CD8-positive, alpha-beta memory T cell (primary cell): ENCODE measurements at regions of chr22 and their contacts with region 1.

Region 1: DNA sequence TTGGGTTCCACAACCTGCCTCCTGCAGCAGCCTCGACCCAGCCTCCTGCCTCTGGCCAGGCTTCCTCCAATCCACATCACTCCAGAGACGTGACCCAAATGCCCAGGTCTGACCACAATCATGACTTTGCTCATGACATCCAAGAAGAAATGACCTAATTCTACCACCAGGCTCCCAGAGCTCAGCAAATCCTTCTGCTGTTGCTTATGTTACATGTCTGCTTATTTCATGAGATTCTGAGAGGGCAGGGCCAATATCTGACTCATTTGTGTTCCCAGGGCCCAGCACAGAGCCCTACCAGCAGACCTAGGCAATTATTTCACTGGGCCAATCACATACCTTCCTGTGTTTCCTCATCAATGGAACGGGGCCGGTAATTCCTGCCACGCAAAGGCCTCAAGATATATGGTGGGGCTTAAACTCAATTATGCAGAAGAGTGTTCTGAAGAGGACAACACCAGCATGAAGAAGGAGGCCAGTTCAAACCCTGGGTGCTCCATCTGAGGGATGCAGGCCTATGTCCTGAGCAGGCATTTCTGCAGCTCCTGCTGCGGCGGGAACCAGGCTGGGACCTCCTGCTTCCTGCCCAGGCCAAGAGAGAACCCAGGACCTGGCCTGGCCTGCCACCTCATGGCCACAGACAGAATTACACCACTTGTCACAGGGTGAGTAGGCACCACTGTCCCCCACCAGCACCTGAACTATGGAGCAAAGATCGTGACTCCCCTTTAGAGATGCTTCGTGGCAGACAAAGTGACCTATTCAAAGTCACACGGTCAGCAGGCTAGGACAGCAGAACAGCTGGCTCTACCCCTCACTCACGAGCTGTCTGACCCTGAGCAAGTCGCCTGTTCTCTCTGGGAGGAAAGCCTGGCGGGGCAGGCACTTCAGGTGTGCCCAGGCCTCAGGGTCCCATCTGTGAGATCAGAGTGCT is 5.9 kb downstream of the CENPM start:
- DNase-seq: peak; percentile 71 to 91 (median 85)
- H3K4me3 ChIP-seq: peak overlapping the region; percentile 39
- H3K4me3 Mint-ChIP-seq: peak overlapping the region; percentile 65 to 98 (median 92)
- H3K27ac ChIP-seq: peak overlapping the region; percentile 95
- H3K27ac Mint-ChIP-seq: peak overlapping the region; percentile 94 to 100 (median 100)
- H3K4me1 ChIP-seq: peaks cover 37% of the 10 kb centered on the region
- H3K4me1 Mint-ChIP-seq: peaks cover 36 to 56% (median 40%) of the 10 kb centered on the region in 3 donors
- H3K27me3 ChIP-seq: no peaks in the 10 kb centered on the region
- H3K27me3 Mint-ChIP-seq: peaks cover 0 to 4% of the 10 kb centered on the region in 2 donors

Region 2: GRCh38 chr22:41666661-41667258 is 274.3 kb before region 1 on chr22:
- CTCF ChIA-PET with region 1: interaction called, 17 read pairs
- POLR2A ChIA-PET with region 1: interaction called, 4 read pairs
- DNase-seq: peak; percentile 88 to 96 (median 93)
- H3K4me3 ChIP-seq: peak overlapping the region; percentile 54
- H3K4me3 Mint-ChIP-seq: peak overlapping the region; percentile 64 to 91 (median 88)
- H3K27ac ChIP-seq: peak overlapping the region; percentile 79
- H3K27ac Mint-ChIP-seq: peak overlapping the region; percentile 81 to 98 (median 96)
- H3K4me1 ChIP-seq: peaks cover 10% of the 10 kb centered on the region
- H3K4me1 Mint-ChIP-seq: peaks cover 13 to 15% (median 15%) of the 10 kb centered on the region in 3 donors
- H3K27me3 ChIP-seq: no peaks in the 10 kb centered on the region
- H3K27me3 Mint-ChIP-seq: no peaks in the 10 kb centered on the region

Region 3: DNA sequence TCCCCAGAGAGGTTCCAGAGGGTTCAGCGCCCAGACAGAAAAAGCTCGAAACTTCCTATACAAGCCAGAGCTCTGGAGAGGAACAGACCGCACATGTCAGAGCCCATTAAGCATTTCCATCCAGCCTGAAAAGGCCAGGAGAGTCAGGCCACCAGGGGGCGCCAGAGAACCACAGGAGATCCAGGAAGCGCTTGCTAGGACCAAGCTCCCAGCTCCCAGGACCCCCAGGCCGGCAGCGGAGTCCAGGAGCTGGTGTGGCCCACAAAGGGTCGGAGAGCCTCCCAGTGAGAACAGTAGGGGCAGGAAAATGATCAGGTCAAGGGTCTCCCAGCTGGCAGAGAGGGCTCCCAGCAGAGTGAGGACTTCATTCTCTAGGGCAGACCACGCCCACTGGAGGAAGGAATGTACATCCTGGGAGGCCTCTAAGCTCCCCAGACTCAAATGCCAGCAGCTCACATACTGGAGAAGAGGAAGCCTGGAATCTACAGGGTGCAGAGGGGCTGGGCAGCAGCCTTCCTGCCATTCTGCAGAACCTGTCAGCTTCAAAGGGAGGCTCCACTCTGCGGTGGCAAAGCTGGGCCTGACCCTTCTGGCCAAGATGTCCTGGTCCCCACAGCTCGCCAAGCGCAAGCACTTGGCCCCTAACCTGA is 243.8 kb before region 1 on chr22:
- CTCF ChIA-PET with region 1: interaction called, 91 read pairs
- POLR2A ChIA-PET with region 1: interaction called, 7 read pairs
- DNase-seq: peak; percentile 76 to 94 (median 89)
- H3K4me3 ChIP-seq: peak overlapping the region; percentile 30
- H3K4me3 Mint-ChIP-seq: peak overlapping the region in 6 of 7 donors; percentile 12 to 76 (median 58)
- H3K27ac ChIP-seq: no peak overlapping the region
- H3K27ac Mint-ChIP-seq: peak overlapping the region in 7 of 8 donors; percentile 64 to 91 (median 87)
- H3K4me1 ChIP-seq: peaks cover 7% of the 10 kb centered on the region
- H3K4me1 Mint-ChIP-seq: peaks cover 9 to 12% (median 11%) of the 10 kb centered on the region in 3 donors
- H3K27me3 ChIP-seq: no peaks in the 10 kb centered on the region
- H3K27me3 Mint-ChIP-seq: peaks cover 0 to 1% of the 10 kb centered on the region in 2 donors

Region 4: GRCh38 chr22:41780746-41781505 is 160.2 kb before region 1 on chr22:
- CTCF ChIA-PET with region 1: interaction called, 13 read pairs
- POLR2A ChIA-PET with region 1: interaction called, 17 read pairs
- DNase-seq: peak; percentile 83 to 96 (median 93)
- H3K4me3 ChIP-seq: peak overlapping the region; percentile 78
- H3K4me3 Mint-ChIP-seq: peak overlapping the region; percentile 76 to 92 (median 90)
- H3K27ac ChIP-seq: peak overlapping the region; percentile 71
- H3K27ac Mint-ChIP-seq: peak overlapping the region; percentile 97 to 100 (median 100)
- H3K4me1 ChIP-seq: peaks cover 44% of the 10 kb centered on the region
- H3K4me1 Mint-ChIP-seq: peaks cover 38 to 54% (median 50%) of the 10 kb centered on the region in 3 donors
- H3K27me3 ChIP-seq: no peaks in the 10 kb centered on the region
- H3K27me3 Mint-ChIP-seq: no peaks in the 10 kb centered on the region

Region 5: DNA sequence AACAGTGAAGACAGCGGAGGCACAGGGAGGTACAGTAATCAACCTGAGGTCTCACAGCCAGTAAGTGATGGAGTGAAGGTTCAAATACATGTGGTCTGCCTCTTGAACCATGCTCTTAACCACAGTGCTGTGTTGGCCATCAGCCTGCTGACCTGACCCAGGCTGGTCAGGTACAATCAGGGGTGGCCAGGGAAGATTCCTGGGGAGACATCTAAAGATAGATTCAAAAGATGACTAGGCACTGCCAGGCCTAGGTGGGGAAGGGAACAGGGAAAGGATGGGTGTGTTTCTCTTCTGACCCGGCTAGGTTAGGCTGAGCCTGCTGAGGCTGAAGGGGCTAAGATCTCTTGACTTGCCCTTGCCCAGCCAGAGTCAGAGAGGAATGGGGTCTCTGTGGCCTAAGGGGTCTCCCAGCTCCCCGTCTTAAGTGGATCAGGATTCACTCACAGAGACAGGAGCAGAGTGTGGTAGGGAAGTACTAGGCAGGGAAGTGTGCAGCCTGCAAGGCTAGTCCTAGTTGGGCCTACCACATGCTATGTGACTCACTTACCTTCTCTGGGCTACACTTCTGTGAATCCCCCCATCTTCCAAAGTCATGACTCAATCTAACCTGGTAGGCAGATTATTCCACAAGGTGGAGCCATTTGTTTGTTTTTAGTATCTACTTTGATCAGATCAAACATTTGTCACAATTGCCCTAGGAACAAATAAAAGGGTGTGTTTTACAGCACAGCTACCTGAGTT is 118.6 kb before region 1 on chr22:
- CTCF ChIA-PET with region 1: interaction called, 47 read pairs
- POLR2A ChIA-PET with region 1: interaction called, 18 read pairs
- DNase-seq: peak in 4 of 5 donors; percentile 15 to 71 (median 58)
- H3K4me3 ChIP-seq: no peak overlapping the region
- H3K4me3 Mint-ChIP-seq: peak overlapping the region in 1 of 7 donors; percentile 43
- H3K27ac ChIP-seq: no peak overlapping the region
- H3K27ac Mint-ChIP-seq: peak overlapping the region; percentile 27 to 88 (median 65)
- H3K4me1 ChIP-seq: no peaks in the 10 kb centered on the region
- H3K4me1 Mint-ChIP-seq: peaks cover 6 to 15% (median 11%) of the 10 kb centered on the region in 3 donors
- H3K27me3 ChIP-seq: no peaks in the 10 kb centered on the region
- H3K27me3 Mint-ChIP-seq: peaks cover 0 to 2% of the 10 kb centered on the region in 2 donors

Region 6: GRCh38 chr22:41857155-41857859 is 83.8 kb before region 1 on chr22:
- CTCF ChIA-PET with region 1: interaction called, 20 read pairs
- POLR2A ChIA-PET with region 1: interaction called, 12 read pairs
- DNase-seq: peak; percentile 59 to 77 (median 69)
- H3K4me3 ChIP-seq: no peak overlapping the region
- H3K4me3 Mint-ChIP-seq: peak overlapping the region in 6 of 7 donors; percentile 11 to 66 (median 40)
- H3K27ac ChIP-seq: no peak overlapping the region
- H3K27ac Mint-ChIP-seq: peak overlapping the region; percentile 81 to 96 (median 88)
- H3K4me1 ChIP-seq: peaks cover 31% of the 10 kb centered on the region
- H3K4me1 Mint-ChIP-seq: peaks cover 41 to 68% (median 60%) of the 10 kb centered on the region in 3 donors
- H3K27me3 ChIP-seq: no peaks in the 10 kb centered on the region
- H3K27me3 Mint-ChIP-seq: no peaks in the 10 kb centered on the region

Region 7: GRCh38 chr22:41919357-41920224 is 21.5 kb before region 1 on chr22:
- CTCF ChIA-PET with region 1: interaction called, 106 read pairs
- POLR2A ChIA-PET with region 1: interaction called, 12 read pairs
- DNase-seq: peak in 3 of 5 donors; percentile 35 to 67 (median 46)
- H3K4me3 ChIP-seq: peak overlapping the region; percentile 67
- H3K4me3 Mint-ChIP-seq: peak overlapping the region; percentile 45 to 75 (median 65)
- H3K27ac ChIP-seq: no peak overlapping the region
- H3K27ac Mint-ChIP-seq: peak overlapping the region in 4 of 8 donors; percentile 24 to 77 (median 42)
- H3K4me1 ChIP-seq: peaks cover 20% of the 10 kb centered on the region
- H3K4me1 Mint-ChIP-seq: peaks cover 0 to 26% (median 14%) of the 10 kb centered on the region in 3 donors
- H3K27me3 ChIP-seq: peaks cover 14% of the 10 kb centered on the region
- H3K27me3 Mint-ChIP-seq: peaks cover 9 to 12% of the 10 kb centered on the region in 2 donors

Region 8: DNA sequence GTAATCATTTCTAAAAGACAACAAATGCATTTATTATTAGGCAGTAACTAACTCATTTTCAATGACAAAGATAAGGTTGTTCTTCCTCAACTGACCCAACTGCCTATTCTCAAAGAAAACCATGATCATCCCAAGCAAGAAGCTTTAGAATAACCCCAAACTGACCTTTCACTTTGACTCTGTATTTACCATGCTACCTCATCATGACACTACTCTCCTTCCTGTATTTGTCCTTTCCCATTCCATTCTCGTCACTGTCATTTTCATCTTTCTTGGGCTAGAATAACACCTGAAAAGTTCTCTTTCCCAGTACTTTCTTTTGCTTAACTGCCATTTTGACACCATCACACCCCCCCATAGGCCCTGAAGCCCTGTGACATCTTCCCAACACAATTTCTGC is 281.0 kb after region 1 on chr22:
- CTCF ChIA-PET with region 1: no interaction called
- POLR2A ChIA-PET with region 1: no interaction called
- DNase-seq: no peak
- H3K4me3 ChIP-seq: no peak overlapping the region
- H3K4me3 Mint-ChIP-seq: no peak overlapping the region
- H3K27ac ChIP-seq: peak overlapping the region; percentile 0
- H3K27ac Mint-ChIP-seq: peak overlapping the region in 5 of 8 donors; percentile 2 to 45 (median 38)
- H3K4me1 ChIP-seq: peaks cover 37% of the 10 kb centered on the region
- H3K4me1 Mint-ChIP-seq: peaks cover 57 to 78% (median 66%) of the 10 kb centered on the region in 3 donors
- H3K27me3 ChIP-seq: no peaks in the 10 kb centered on the region
- H3K27me3 Mint-ChIP-seq: peaks cover 0 to 2% of the 10 kb centered on the region in 2 donors